Left cardiac atrium (tissue), 4 donors: ENCODE measurements at regions of chr17 and their contacts with region 1.

Region 1: DNA sequence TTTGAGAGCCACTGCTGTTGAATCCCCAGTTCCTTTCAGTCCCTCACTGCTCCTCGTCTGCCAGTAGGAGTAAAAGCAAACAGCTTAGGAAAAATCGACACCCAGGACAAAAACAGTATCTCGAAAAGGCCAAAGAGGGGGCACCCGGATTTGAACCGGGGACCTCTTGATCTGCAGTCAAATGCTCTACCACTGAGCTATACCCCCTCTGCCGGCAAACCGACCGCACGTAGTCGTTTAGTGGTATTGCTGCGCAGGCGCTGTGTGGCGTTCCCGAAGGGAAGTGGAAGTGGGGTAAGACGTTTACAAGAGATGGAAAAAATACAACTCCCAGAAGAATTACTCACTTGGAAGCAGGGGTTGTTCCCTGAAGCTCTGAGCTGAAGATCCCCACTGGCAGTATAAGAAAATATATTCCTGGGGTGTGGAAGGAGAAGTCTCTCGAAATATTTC is 2.2 kb upstream of the PLXDC1 start:
- DNase-seq: peak; percentile 87
- ATAC-seq: peak; percentile 87 to 92

Region 2: GRCh38 chr17:39069114-39069756 is 84.4 kb before region 1 on chr17:
- intact Hi-C with region 1: loop called (anchors 5 to 10 kb)
- DNase-seq: no peak
- ATAC-seq: peak; percentile 54 to 81

Region 3: GRCh38 chr17:39099663-39100286 is 53.9 kb before region 1 on chr17:
- intact Hi-C with region 1: no loop called
- DNase-seq: peak; percentile 74
- ATAC-seq: peak; percentile 40 to 59

Region 4: DNA sequence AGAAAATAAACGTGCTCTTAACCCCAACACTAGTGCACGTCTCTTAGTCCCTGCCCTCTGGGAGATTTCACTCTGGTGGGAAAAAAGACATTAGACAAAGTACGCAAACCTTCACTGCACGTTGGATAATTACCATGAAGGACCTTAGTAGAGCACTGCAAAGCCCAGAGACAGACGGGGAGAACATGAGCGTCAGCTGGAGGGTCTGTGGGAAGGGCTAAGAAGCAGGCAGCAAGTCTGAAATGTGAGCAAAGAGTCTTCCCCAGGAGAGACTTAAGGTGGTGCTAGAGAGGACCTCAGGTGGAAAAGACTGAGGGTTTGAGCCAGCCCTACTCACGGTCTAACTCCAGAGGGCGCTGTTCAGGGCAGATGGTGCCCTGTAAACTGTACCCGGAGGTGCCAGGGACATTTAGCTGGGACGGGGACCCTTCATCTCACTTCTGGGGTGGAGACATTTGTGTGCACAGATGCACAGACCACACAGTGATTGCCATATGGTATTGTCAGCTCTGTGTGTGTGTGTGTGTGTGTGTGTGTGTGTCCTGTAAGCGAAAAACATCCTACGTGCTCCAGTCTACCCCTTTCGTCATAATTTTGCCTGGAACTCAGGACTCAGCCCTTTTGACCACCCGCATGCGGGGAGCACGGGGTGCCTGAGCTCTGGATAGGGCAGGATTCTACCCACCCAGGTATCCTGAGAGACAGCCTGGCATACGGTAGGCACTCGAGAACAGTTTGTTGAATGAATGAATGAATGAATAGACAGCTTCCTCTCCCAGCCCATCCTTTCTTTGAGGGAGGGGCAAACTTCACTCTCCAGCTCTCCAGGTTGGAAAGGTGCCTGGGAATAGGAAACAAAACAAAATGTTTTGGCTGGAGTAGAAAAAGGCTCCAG is 82.2 kb after region 1 on chr17:
- intact Hi-C with region 1: no loop called
- DNase-seq: no peak
- ATAC-seq: peak in 1 of 2 donors; percentile 13

Region 5: GRCh38 chr17:39473310-39473709 is 319.7 kb after region 1 on chr17:
- intact Hi-C with region 1: no loop called
- DNase-seq: no peak
- ATAC-seq: no peak